GM12878 (cell line): ENCODE measurements at regions of chr2 and their contacts with region 1.

Region 1: DNA sequence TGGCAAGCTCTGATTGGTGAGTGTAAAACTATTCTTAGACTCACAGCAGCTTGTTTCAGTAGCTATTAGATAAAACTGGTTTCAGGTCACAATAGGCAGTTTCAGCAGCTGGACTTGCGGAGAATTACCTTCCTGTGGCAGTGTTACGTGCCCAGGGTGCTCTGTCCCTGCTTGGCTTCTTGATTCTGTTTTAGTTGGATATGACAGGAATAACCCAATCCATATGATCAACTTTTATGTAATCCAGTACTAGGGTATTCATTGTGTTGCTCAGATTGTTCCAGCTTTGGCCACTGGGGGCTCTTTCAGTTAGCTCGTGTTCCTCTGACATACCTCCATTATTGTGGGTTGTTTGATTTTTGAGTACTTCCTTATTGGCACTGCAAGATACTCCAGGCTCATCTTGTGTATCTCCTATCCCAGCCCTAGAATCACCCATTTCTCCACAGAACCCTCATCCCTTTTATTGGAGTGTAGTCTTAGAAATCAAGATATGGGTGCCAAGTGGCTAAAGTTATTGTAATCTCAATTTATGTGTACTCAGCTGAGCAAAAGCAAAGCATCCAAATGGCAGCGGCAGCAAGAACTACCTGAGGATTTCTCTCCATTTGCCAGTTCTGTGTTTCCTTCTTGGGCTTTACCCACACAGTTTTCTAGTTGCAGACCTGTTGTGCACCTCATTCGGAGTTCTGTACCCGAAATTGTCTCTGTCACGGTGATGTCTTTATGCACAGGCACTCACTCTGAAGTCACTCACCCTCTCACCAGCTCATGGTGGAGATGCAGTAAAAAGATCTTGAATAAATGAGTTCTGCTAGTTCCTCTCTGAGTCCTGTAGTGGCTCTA is 43.4 kb downstream of the INPP4A start:
- DNase-seq: peak; percentile 92
- ATAC-seq: peak; percentile 69
- H3K4me3 ChIP-seq: peak overlapping the region; percentile 17; the same call in 1 of the 2 replicates
- H3K27ac ChIP-seq: peak overlapping the region; percentile 78
- H3K4me1 ChIP-seq: peaks cover 77% of the 10 kb centered on the region
- H3K27me3 ChIP-seq: no peaks in the 10 kb centered on the region
- CTCF ChIP-seq: peak; percentile 32 to 55 (median 49)
- EP300 ChIP-seq: peak in 1 of 2 experiments; percentile 69; a peak in 2 of 4 replicates
- POLR2A ChIP-seq: peak; percentile 57; the same call in 1 of the 2 replicates
- RAD21 ChIP-seq: no peak

Region 2: GRCh38 chr2:98444436-98445176 is 43.4 kb before region 1 on chr2 and contains the start of gene INPP4A:
- CTCF ChIA-PET with region 1: interaction called, 29 read pairs
- POLR2A ChIA-PET with region 1: interaction called, 545 read pairs
- RAD21 ChIA-PET with region 1: interaction called, 18 read pairs
- SMC1A ChIA-PET with region 1: interaction called, 816 read pairs
- in situ Hi-C with region 1: no loop called
- intact Hi-C with region 1: loop called (anchors 5 kb)
- DNase-seq: no peak
- ATAC-seq: peak; percentile 71
- H3K4me3 ChIP-seq: peak within 1 kb of the TSS; percentile 86
- H3K27ac ChIP-seq: peak within 1 kb of the TSS; percentile 83
- H3K4me1 ChIP-seq: no peaks in the 10 kb centered on the region
- H3K27me3 ChIP-seq: no peaks in the 10 kb centered on the region
- CTCF ChIP-seq: peak in 1 of 3 experiments; percentile 13; a peak in 1 of 6 replicates
- EP300 ChIP-seq: no peak
- POLR2A ChIP-seq: peak; percentile 80
- RAD21 ChIP-seq: peak; percentile 32; the same call in 1 of the 2 replicates
- polyA plus RNA-seq, gene INPP4A: 4.7 to 6.2 TPM

Region 3: GRCh38 chr2:98455494-98455976 is 32.5 kb before region 1 on chr2:
- CTCF ChIA-PET with region 1: interaction called, 19 read pairs
- POLR2A ChIA-PET with region 1: interaction called, 545 read pairs
- RAD21 ChIA-PET with region 1: interaction called, 11 read pairs
- SMC1A ChIA-PET with region 1: interaction called, 816 read pairs
- in situ Hi-C with region 1: no loop called
- intact Hi-C with region 1: loop called (anchors 1 kb)
- DNase-seq: peak; percentile 68
- ATAC-seq: peak; percentile 53
- H3K4me3 ChIP-seq: peak overlapping the region; percentile 58; the same call in 1 of the 2 replicates
- H3K27ac ChIP-seq: peak overlapping the region; percentile 77
- H3K4me1 ChIP-seq: peaks cover 82% of the 10 kb centered on the region
- H3K27me3 ChIP-seq: no peaks in the 10 kb centered on the region
- CTCF ChIP-seq: no peak
- EP300 ChIP-seq: no peak
- POLR2A ChIP-seq: 0 out of 2 replicates have a peak, but pooled peaks have one; percentile 35
- RAD21 ChIP-seq: no peak

Region 4: DNA sequence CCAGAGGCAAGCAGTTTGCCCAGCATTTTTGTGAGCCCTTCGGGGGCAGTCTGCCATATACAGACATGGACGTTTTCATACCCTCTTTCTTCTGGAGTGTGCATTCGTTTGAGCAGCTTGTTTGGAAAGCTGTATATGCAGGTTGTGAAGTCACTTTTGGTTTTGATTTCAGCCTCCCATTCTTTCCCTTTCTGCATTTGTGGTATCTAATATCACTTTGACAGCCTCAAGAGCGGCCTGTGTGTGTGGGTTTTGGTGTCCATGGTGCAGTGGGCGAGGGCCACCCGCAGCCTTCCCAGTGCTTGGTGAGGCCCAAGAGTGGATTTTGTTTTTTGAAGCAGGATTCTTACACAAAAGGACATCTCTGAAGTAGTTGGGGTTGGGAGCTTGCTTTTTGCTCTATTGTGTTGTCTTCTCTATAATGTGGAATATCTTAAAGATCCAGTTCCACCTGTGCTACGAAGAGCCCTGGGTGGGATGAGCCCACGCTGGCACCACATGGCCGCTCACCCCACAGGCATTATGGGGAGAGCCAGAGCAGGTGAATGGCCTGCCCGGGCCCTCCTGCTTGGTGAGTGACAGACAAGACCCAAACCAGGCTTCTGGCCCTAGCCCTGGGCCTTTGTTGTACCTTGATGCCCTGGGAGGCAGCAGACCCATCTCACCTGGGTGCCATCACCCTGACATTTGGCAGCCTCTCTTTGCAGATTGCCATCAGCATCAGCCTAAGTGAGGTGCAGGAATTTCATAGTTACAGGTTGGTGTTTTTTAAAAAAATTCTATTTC is 13.8 kb before region 1 on chr2:
- CTCF ChIA-PET with region 1: interaction called, 64 read pairs
- POLR2A ChIA-PET with region 1: interaction called, 545 read pairs
- RAD21 ChIA-PET with region 1: interaction called, 200 read pairs
- SMC1A ChIA-PET with region 1: interaction called, 816 read pairs
- in situ Hi-C with region 1: no loop called
- intact Hi-C with region 1: no loop called
- DNase-seq: no peak
- ATAC-seq: peak; percentile 31
- H3K4me3 ChIP-seq: peak overlapping the region; percentile 34; the same call in 1 of the 2 replicates
- H3K27ac ChIP-seq: peak overlapping the region; percentile 88
- H3K4me1 ChIP-seq: peaks cover 96% of the 10 kb centered on the region
- H3K27me3 ChIP-seq: no peaks in the 10 kb centered on the region; a peak in 1 of 4 replicates
- CTCF ChIP-seq: no peak
- EP300 ChIP-seq: no peak
- POLR2A ChIP-seq: no peak
- RAD21 ChIP-seq: no peak

Region 5: GRCh38 chr2:98505311-98505808 is 17.3 kb after region 1 on chr2:
- CTCF ChIA-PET with region 1: interaction called, 11 read pairs
- POLR2A ChIA-PET with region 1: interaction called, 7 read pairs
- RAD21 ChIA-PET with region 1: interaction called, 6 read pairs
- SMC1A ChIA-PET with region 1: interaction called, 5 read pairs
- in situ Hi-C with region 1: no loop called
- intact Hi-C with region 1: no loop called
- DNase-seq: no peak
- ATAC-seq: no peak
- H3K4me3 ChIP-seq: no peak overlapping the region
- H3K27ac ChIP-seq: peak overlapping the region; percentile 16
- H3K4me1 ChIP-seq: peaks cover 35% of the 10 kb centered on the region
- H3K27me3 ChIP-seq: no peaks in the 10 kb centered on the region
- CTCF ChIP-seq: no peak
- EP300 ChIP-seq: no peak
- POLR2A ChIP-seq: no peak
- RAD21 ChIP-seq: no peak

Region 6: DNA sequence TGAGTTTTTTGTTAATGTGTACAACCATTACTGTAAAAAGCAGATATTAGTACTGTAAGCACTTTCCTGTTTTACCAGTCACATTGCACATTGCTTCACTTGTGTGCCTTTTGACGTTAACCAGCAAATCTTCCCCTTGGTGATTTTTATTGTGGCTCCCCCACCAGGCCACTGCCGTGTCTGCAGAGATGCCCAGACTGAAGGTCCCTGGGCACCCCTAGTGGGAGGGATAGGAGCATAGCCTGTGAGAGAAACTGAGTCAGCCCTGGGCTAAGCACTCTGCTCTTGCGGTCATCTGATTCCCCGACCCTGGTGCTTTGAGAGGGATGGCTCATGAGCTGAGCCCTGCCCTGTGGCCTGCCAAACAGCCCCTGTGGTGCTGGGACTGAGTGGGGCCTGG is 30.1 kb after region 1 on chr2:
- CTCF ChIA-PET with region 1: interaction called, 7 read pairs
- POLR2A ChIA-PET with region 1: interaction called, 3 read pairs
- RAD21 ChIA-PET with region 1: interaction called, 6 read pairs
- SMC1A ChIA-PET with region 1: interaction called, 13 read pairs
- in situ Hi-C with region 1: no loop called
- intact Hi-C with region 1: no loop called
- DNase-seq: no peak
- ATAC-seq: peak; percentile 84
- H3K4me3 ChIP-seq: no peak overlapping the region
- H3K27ac ChIP-seq: no peak overlapping the region; the same call in 1 of the 2 replicates
- H3K4me1 ChIP-seq: peaks cover 20% of the 10 kb centered on the region
- H3K27me3 ChIP-seq: no peaks in the 10 kb centered on the region
- CTCF ChIP-seq: peak; percentile 69 to 88 (median 71)
- EP300 ChIP-seq: no peak
- POLR2A ChIP-seq: no peak
- RAD21 ChIP-seq: peak; percentile 81

Region 7: DNA sequence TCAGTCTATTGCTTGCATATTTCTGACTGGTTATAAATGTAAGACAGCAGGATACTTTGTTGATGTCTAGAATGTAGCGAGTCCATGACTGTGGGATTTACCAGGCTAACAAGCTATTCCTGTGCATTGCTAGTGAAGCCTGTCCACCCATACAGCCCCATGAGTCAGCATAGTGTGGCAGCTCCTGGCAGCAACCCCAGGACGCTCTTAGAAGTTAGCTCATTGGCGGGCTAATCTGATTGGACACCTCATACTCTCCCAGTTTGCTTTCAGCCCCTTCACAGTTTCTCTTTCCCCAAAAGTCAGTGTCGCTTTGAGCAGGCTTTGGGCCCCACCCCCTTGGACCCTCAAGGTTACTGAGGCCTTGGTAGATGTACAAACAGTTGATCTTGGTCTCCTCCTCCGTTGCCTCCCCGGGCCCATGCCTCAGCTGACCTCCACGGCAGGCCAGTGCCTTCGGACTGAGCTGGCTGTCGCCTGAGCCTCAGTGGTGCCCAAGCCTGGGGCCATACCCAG is 72.3 kb after region 1 on chr2:
- CTCF ChIA-PET with region 1: no interaction called
- POLR2A ChIA-PET with region 1: no interaction called
- RAD21 ChIA-PET with region 1: interaction called, 3 read pairs
- SMC1A ChIA-PET with region 1: interaction called, 10 read pairs
- in situ Hi-C with region 1: no loop called
- intact Hi-C with region 1: no loop called
- DNase-seq: no peak
- ATAC-seq: no peak
- H3K4me3 ChIP-seq: no peak overlapping the region
- H3K27ac ChIP-seq: no peak overlapping the region
- H3K4me1 ChIP-seq: peaks cover 16% of the 10 kb centered on the region
- H3K27me3 ChIP-seq: no peaks in the 10 kb centered on the region
- CTCF ChIP-seq: no peak
- EP300 ChIP-seq: no peak
- POLR2A ChIP-seq: no peak
- RAD21 ChIP-seq: no peak